PC-9 (cell line): ENCODE measurements at regions of chr6 and their contacts with region 1.

Region 1: DNA sequence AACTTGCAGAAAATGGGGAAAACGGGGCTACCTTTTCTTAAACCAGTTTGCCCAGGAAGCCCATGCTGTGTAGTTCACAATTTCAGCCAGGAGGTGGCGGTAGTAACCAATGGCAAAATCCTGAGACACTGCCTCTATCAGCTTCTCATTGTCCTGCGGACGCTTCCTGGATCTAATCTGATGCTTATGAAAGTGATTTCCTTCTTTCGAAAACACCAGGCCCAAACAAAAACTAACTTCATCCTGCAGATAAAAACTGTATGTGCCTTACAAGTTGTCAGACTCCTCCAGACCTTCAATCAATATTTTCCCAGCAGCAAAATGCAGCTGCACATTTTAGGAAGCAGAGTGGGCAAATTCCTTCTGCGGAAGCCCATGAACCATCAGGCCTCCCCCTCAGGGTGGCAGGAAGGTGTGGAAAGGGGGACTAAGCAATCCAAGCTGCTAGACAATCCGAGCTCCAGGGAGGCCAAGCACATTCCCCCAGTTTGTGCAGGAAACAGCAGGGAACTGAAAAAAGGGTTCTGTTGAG is 88.5 kb downstream of the LY86 start:
- DNase-seq: peak; percentile 68 to 82
- H3K4me3 ChIP-seq: no peak overlapping the region
- H3K27ac ChIP-seq: no peak overlapping the region
- H3K4me1 ChIP-seq: peaks cover 33% of the 10 kb centered on the region
- H3K27me3 ChIP-seq: no peaks in the 10 kb centered on the region
- CTCF ChIP-seq: peak; percentile 92

Region 2: DNA sequence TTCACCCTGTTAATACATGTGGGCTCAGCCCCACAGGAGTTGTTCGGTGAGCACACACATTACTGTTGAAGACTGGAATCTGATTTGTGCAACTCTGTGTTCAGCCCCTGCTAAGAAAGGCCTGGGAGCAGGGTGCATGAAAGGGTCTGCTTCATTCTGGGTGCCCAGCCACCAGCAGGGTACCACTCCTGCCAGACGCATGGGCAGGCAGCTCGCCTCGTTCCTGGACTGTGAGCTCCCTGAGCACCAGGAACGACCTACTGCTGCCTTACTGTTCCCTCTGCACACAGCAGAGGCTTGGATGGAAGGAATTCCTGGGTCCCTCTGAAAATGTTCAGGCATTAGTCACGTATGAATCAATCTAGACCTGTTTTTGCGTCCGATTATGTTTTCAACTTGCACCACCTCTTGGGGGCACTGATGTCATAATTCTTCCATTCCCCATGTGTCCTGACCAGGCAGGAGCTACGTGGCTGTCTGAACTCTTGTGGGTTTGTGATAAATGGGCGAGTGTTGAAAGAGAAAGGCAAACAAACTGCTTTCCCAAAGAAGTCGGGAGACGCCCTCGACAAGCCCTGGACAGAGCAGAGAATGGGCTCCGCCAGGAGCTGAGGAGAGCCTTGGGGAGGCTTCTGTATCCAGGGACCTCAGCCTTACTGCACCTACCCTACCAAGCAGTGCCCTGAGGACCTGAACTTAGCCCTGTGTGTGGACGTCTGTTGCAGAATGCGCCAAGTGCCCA is 35.5 kb after region 1 on chr6:
- CTCF ChIA-PET with region 1: interaction called, 4 read pairs
- POLR2A ChIA-PET with region 1: interaction called, 7 read pairs
- intact Hi-C with region 1: loop called (anchors 1 kb)
- DNase-seq: peak; percentile 79 to 96
- H3K4me3 ChIP-seq: peak overlapping the region; percentile 23; the same call in 1 of the 2 replicates
- H3K27ac ChIP-seq: peak overlapping the region; percentile 83
- H3K4me1 ChIP-seq: peaks cover 21% of the 10 kb centered on the region
- H3K27me3 ChIP-seq: no peaks in the 10 kb centered on the region
- CTCF ChIP-seq: no peak; the same call in 1 of the 2 replicates

Region 3: GRCh38 chr6:6820641-6821238 is 143.8 kb after region 1 on chr6:
- CTCF ChIA-PET with region 1: no interaction called
- POLR2A ChIA-PET with region 1: no interaction called
- intact Hi-C with region 1: loop called (anchors 5 kb)
- DNase-seq: peak; percentile 96 to 97
- H3K4me3 ChIP-seq: no peak overlapping the region
- H3K27ac ChIP-seq: peak overlapping the region; percentile 94
- H3K4me1 ChIP-seq: peaks cover 69% of the 10 kb centered on the region
- H3K27me3 ChIP-seq: no peaks in the 10 kb centered on the region
- CTCF ChIP-seq: no peak

Region 4: GRCh38 chr6:6927521-6928371 is 250.8 kb after region 1 on chr6:
- CTCF ChIA-PET with region 1: no interaction called
- POLR2A ChIA-PET with region 1: no interaction called
- intact Hi-C with region 1: loop called (anchors 1 kb)
- DNase-seq: peak in 1 of 2 experiments; percentile 28
- H3K4me3 ChIP-seq: no peak overlapping the region
- H3K27ac ChIP-seq: no peak overlapping the region
- H3K4me1 ChIP-seq: peaks cover 6% of the 10 kb centered on the region
- H3K27me3 ChIP-seq: no peaks in the 10 kb centered on the region
- CTCF ChIP-seq: no peak

Region 5: DNA sequence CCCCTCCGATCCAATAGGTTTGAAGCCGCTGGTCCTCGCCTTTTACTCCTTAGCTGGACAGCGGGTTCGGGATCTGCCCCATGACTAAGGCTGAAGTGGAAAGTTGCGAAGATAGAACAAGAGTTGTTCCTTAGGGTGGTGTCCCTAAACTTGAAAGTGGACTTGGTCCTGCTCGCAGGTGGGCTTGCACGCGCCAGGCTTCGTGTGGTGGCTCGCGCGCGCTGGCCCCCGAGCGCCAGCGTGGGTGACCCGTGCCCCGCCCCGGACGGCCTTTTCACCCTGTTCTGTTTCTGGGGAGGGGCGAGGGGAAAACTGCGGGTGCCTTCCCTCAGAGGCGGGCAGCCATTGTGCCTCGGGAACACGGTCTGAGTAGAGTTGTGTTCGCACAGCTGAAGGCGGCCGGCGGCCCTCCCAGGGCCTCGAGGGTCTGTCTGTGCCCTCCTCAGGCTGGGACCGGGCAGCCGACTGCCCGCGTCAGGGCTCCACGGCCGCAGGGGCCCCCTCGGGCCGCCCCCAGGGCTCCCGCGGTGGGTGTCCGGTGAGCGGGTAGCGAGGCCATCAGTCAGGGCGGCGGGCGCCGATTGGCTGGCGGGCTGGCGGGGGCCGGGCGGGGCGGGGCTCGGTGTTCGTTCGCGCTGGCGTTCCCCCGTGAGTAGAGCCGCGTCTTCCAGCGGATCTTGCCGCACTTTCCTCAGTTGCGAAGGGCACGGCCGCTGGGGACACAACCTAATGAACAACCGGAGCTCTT is 463.8 kb after region 1 on chr6:
- CTCF ChIA-PET with region 1: no interaction called
- POLR2A ChIA-PET with region 1: interaction called, 26 read pairs
- intact Hi-C with region 1: no loop called
- DNase-seq: peak; percentile 51 to 89
- H3K4me3 ChIP-seq: peak overlapping the region; percentile 56
- H3K27ac ChIP-seq: peak overlapping the region; percentile 68
- H3K4me1 ChIP-seq: peaks cover 63% of the 10 kb centered on the region
- H3K27me3 ChIP-seq: no peaks in the 10 kb centered on the region
- CTCF ChIP-seq: no peak

Region 6: GRCh38 chr6:7389451-7390225 is 712.7 kb after region 1 on chr6 and contains the starts of genes CAGE1 and RIOK1:
- CTCF ChIA-PET with region 1: no interaction called
- POLR2A ChIA-PET with region 1: no interaction called
- intact Hi-C with region 1: loop called (anchors 1 kb)
- DNase-seq: peak; percentile 86 to 96
- H3K4me3 ChIP-seq: peak within 1 kb of the TSS; percentile 80
- H3K27ac ChIP-seq: peak within 1 kb of the TSS; percentile 89
- H3K4me1 ChIP-seq: peaks cover 19% of the 10 kb centered on the region
- H3K27me3 ChIP-seq: no peaks in the 10 kb centered on the region
- CTCF ChIP-seq: 0 out of 2 replicates have a peak, but pooled peaks have one; percentile 29
- total RNA-seq, gene CAGE1: 0.13 TPM in 2 replicates
- total RNA-seq, gene RIOK1: 16.9 and 24.9 TPM in 2 replicates